GM12878 (cell line): ENCODE measurements at regions of chr10 and their contacts with region 1.

Region 1: DNA sequence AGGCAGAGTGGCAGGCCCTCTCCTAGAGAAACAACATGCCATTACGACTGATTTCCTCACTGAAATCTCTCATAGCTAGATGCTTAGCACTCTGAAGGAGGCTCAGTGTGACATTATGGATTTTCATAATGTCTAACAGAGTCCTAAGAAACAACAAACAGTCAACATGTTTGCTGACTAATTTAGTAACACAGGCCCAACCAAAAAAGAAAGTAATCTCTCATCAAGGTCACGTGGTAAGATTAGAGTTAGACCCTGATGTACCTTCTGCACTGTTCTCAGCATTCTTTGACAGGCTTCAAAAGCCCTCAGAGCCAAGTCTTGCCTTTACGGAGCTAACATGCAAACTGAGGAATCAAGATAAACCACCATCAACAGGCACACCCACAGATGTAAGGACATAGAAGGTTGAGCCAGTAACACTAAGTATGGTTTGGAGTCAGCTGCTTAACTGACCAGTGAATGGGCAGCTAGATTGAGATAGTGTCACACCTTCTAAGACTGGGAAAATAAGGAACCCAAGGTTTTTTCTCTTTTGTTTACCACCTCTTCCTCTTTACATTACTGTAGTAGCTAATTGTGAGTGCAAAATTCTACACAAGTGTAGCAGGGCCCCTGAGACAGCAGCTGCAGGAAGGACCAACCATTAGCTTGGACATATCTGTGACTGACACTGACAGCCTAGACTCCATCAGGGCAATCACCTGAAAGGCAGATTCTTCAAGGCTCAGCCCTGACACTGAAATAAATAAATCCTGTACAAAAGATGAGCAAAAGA is 15.3 kb upstream of the KCNIP2 start:
- DNase-seq: peak; percentile 61
- ATAC-seq: peak; percentile 91
- H3K4me3 ChIP-seq: peak overlapping the region; percentile 28; the same call in 1 of the 2 replicates
- H3K27ac ChIP-seq: peak overlapping the region; percentile 83
- H3K4me1 ChIP-seq: peaks cover 32% of the 10 kb centered on the region
- H3K27me3 ChIP-seq: no peaks in the 10 kb centered on the region
- CTCF ChIP-seq: no peak
- EP300 ChIP-seq: peak in 1 of 2 experiments; percentile 37; a peak in 1 of 4 replicates
- POLR2A ChIP-seq: peak; percentile 45; the same call in 1 of the 2 replicates
- RAD21 ChIP-seq: no peak

Region 2: GRCh38 chr10:100100651-100101184 is 1758.2 kb before region 1 on chr10:
- CTCF ChIA-PET with region 1: no interaction called
- POLR2A ChIA-PET with region 1: no interaction called
- RAD21 ChIA-PET with region 1: no interaction called
- SMC1A ChIA-PET with region 1: no interaction called
- in situ Hi-C with region 1: no loop called
- intact Hi-C with region 1: no loop called
- DNase-seq: no peak
- ATAC-seq: peak; percentile 41; the same call in 2 of the 3 replicates
- H3K4me3 ChIP-seq: no peak overlapping the region
- H3K27ac ChIP-seq: no peak overlapping the region
- H3K4me1 ChIP-seq: no peaks in the 10 kb centered on the region
- H3K27me3 ChIP-seq: peaks cover 0 to 2% of the 10 kb centered on the region in 2 experiments; a peak in 1 of 4 replicates
- CTCF ChIP-seq: peak; percentile 23 to 41 (median 32); a peak in 4 of 6 replicates
- EP300 ChIP-seq: no peak
- POLR2A ChIP-seq: no peak
- RAD21 ChIP-seq: peak; percentile 61

Region 3: DNA sequence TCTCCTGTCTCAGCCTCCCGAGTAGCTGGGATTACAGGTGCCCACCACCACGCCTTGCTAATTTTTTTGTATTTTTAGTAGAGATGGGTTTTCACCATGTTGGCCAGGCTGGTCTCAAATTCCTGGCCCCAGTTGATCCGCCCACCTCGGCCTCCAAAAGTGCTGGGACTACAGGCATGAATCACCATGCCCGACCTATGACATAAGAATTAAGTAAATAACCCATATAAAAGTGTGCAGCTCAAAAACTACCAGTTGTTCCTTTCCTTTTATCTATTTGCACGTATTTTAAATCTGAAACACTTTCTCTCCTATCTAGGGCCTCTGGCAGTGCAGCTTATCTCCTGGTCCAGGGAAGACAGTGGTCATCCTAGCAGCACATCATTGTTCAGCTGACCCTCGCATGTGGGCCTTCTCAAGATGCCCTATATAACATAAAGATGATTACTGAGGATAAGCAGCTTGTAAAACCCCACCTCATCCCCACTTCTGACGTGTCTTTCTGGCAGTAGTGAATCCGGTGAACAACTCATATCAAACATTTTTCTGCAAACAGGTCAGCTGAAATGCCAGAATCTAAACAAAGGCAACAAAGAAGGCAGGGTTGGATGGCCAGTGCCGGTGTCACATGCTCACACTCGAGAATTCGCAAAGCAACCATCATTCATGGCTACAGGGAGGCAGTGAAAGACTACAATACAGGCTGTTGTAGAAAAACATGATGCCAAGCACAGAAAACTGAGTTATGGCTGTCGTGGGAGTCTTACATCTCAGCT is 20.7 kb after region 1 on chr10:
- CTCF ChIA-PET with region 1: interaction called, 4 read pairs
- POLR2A ChIA-PET with region 1: interaction called, 3 read pairs
- RAD21 ChIA-PET with region 1: interaction called, 10 read pairs
- SMC1A ChIA-PET with region 1: interaction called, 22 read pairs
- in situ Hi-C with region 1: no loop called
- intact Hi-C with region 1: no loop called
- DNase-seq: no peak
- ATAC-seq: no peak
- H3K4me3 ChIP-seq: no peak overlapping the region
- H3K27ac ChIP-seq: no peak overlapping the region
- H3K4me1 ChIP-seq: peaks cover 9% of the 10 kb centered on the region
- H3K27me3 ChIP-seq: no peaks in the 10 kb centered on the region
- CTCF ChIP-seq: no peak
- EP300 ChIP-seq: no peak
- POLR2A ChIP-seq: no peak
- RAD21 ChIP-seq: no peak